CD14-positive monocyte (primary cell): ENCODE measurements at regions of chr18 and their contacts with region 1.

Region 1: GRCh38 chr18:9905401-9905922 is 8.4 kb upstream of the VAPA start:
- DNase-seq: no peak
- H3K4me3 ChIP-seq: no peak overlapping the region
- H3K4me3 Mint-ChIP-seq: no peak overlapping the region
- H3K27ac ChIP-seq: no peak overlapping the region
- H3K27ac Mint-ChIP-seq: no peak overlapping the region
- H3K4me1 ChIP-seq: peaks cover 7 to 8% of the 10 kb centered on the region in 2 donors
- H3K4me1 Mint-ChIP-seq: peaks cover 17% of the 10 kb centered on the region
- H3K27me3 ChIP-seq: no peaks in the 10 kb centered on the region
- H3K27me3 Mint-ChIP-seq: peaks cover 0 to 3% (median 2%) of the 10 kb centered on the region in 3 donors
- CTCF ChIP-seq: no peak

Region 2: DNA sequence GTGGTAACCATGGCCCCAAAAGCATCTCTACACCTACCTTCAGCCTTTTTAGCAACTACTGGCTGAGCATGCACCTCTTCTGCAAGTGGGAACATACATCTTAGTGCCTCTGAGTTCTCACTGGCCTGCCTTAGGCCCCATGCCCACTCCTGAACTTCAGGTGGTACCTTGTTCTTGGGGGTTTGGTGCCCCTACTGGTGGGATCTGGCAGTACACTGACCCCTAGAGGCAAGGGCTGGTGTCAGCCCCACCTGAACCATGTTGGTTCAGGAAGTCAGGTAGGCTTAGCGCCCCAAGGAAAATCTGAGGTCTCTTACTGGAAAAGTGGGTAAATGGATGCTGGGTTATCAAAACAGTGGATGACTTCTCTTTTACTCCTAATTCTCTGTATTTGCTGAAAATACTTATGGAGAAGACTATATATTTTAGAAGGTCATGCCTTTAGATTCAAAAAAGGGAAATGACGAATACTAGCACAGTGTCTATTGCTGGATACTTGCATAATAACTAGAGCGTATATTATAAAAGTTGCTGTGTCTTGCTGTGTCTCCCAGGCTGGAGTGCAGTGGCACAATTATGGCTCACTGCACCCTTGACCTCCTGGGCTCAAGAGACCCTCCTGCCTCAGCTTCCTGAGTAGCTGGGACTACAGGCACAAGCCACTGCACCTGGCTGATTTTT is 112.8 kb before region 1 on chr18:
- intact Hi-C with region 1: no loop called
- DNase-seq: peak; percentile 67 to 84 (median 73)
- H3K4me3 ChIP-seq: peak overlapping the region in 1 of 3 experiments; percentile 2
- H3K4me3 Mint-ChIP-seq: no peak overlapping the region
- H3K27ac ChIP-seq: peak overlapping the region; percentile 77 to 82
- H3K27ac Mint-ChIP-seq: peak overlapping the region; percentile 90 to 98 (median 93)
- H3K4me1 ChIP-seq: peaks cover 22 to 23% of the 10 kb centered on the region in 2 donors
- H3K4me1 Mint-ChIP-seq: peaks cover 33% of the 10 kb centered on the region
- H3K27me3 ChIP-seq: no peaks in the 10 kb centered on the region
- H3K27me3 Mint-ChIP-seq: no peaks in the 10 kb centered on the region
- CTCF ChIP-seq: peak; percentile 98

Region 3: GRCh38 chr18:9849407-9850281 is 55.8 kb before region 1 on chr18:
- intact Hi-C with region 1: loop called (anchors 5 to 10 kb)
- DNase-seq: peak; percentile 83 to 86 (median 85)
- H3K4me3 ChIP-seq: peak overlapping the region in 1 of 3 experiments; percentile 29
- H3K4me3 Mint-ChIP-seq: peak overlapping the region; percentile 68 to 81
- H3K27ac ChIP-seq: peak overlapping the region; percentile 80 to 88
- H3K27ac Mint-ChIP-seq: peak overlapping the region; percentile 94 to 98 (median 97)
- H3K4me1 ChIP-seq: peaks cover 39 to 45% of the 10 kb centered on the region in 2 donors
- H3K4me1 Mint-ChIP-seq: peaks cover 61% of the 10 kb centered on the region
- H3K27me3 ChIP-seq: no peaks in the 10 kb centered on the region
- H3K27me3 Mint-ChIP-seq: peaks cover 0 to 5% (median 0%) of the 10 kb centered on the region in 3 donors
- CTCF ChIP-seq: no peak

Region 4: GRCh38 chr18:9869715-9870430 is 35.6 kb before region 1 on chr18:
- intact Hi-C with region 1: loop called in 1 of 2 experiments (anchors 5 kb)
- DNase-seq: peak; percentile 73 to 83 (median 79)
- H3K4me3 ChIP-seq: no peak overlapping the region
- H3K4me3 Mint-ChIP-seq: peak overlapping the region in 1 of 2 donors; percentile 49
- H3K27ac ChIP-seq: peak overlapping the region in 1 of 2 donors; percentile 63
- H3K27ac Mint-ChIP-seq: peak overlapping the region; percentile 51 to 91 (median 78)
- H3K4me1 ChIP-seq: peaks cover 34 to 47% of the 10 kb centered on the region in 2 donors
- H3K4me1 Mint-ChIP-seq: peaks cover 49% of the 10 kb centered on the region
- H3K27me3 ChIP-seq: no peaks in the 10 kb centered on the region
- H3K27me3 Mint-ChIP-seq: peaks cover 0 to 2% (median 0%) of the 10 kb centered on the region in 3 donors
- CTCF ChIP-seq: no peak

Region 5: DNA sequence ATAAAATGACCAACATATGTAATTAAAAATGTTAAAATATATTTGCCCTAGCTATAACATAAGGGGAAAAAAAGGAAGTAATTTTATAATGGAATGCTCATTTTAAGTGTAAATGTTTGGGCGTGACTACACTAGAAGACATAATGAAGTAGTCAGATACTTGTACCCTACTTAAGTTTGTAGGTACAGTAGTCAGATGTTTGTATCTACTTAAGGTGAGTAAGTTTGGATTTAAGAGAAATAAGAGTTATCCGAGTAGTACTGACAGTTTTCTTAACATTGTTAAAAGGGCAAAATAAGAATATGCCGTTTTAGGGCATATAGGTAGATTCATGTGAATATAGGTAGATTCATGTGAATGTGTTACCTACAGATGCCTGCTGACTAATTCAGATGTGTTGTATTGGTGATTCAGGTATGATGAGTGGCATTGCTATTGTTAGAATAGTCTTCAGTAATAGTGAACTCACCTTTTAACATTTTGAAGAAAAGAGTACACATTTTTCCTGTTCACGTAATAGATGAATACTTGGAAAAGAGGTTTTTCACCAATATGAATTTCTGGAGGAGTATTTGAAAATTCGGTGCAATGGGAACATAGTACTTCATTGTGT is 23.3 kb after region 1 on chr18:
- intact Hi-C with region 1: no loop called
- DNase-seq: no peak
- H3K4me3 ChIP-seq: no peak overlapping the region
- H3K4me3 Mint-ChIP-seq: no peak overlapping the region
- H3K27ac ChIP-seq: no peak overlapping the region
- H3K27ac Mint-ChIP-seq: peak overlapping the region in 1 of 7 donors; percentile 26
- H3K4me1 ChIP-seq: peaks cover 5 to 20% of the 10 kb centered on the region in 2 donors
- H3K4me1 Mint-ChIP-seq: peaks cover 37% of the 10 kb centered on the region
- H3K27me3 ChIP-seq: no peaks in the 10 kb centered on the region
- H3K27me3 Mint-ChIP-seq: no peaks in the 10 kb centered on the region
- CTCF ChIP-seq: no peak

Region 6: DNA sequence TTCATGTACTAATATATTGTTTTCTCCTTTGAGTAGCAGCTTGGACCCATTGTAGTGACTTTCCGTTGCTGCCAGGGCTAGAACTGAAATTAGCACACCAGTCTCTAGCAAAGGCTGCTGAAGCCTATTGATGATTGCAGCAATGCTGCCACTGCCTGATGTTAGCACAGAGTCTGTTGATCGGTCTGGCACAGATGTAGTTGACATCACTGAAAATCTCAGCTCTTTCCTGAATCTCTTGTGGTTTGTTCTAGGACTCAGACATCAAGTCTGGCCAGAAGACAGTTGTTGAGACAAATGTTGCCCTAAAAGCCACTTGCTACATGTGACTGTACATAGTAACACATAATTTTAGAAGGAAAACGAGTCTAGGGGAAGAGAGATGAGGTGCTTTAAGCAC is 55.6 kb after region 1 on chr18:
- intact Hi-C with region 1: no loop called
- DNase-seq: no peak
- H3K4me3 ChIP-seq: no peak overlapping the region
- H3K4me3 Mint-ChIP-seq: no peak overlapping the region
- H3K27ac ChIP-seq: no peak overlapping the region
- H3K27ac Mint-ChIP-seq: no peak overlapping the region
- H3K4me1 ChIP-seq: peaks cover 4% of the 10 kb centered on the region in 2 donors
- H3K4me1 Mint-ChIP-seq: peaks cover 10% of the 10 kb centered on the region
- H3K27me3 ChIP-seq: peaks cover 0 to 7% of the 10 kb centered on the region in 2 donors
- H3K27me3 Mint-ChIP-seq: peaks cover 7 to 11% (median 10%) of the 10 kb centered on the region in 3 donors
- CTCF ChIP-seq: no peak

Region 7: DNA sequence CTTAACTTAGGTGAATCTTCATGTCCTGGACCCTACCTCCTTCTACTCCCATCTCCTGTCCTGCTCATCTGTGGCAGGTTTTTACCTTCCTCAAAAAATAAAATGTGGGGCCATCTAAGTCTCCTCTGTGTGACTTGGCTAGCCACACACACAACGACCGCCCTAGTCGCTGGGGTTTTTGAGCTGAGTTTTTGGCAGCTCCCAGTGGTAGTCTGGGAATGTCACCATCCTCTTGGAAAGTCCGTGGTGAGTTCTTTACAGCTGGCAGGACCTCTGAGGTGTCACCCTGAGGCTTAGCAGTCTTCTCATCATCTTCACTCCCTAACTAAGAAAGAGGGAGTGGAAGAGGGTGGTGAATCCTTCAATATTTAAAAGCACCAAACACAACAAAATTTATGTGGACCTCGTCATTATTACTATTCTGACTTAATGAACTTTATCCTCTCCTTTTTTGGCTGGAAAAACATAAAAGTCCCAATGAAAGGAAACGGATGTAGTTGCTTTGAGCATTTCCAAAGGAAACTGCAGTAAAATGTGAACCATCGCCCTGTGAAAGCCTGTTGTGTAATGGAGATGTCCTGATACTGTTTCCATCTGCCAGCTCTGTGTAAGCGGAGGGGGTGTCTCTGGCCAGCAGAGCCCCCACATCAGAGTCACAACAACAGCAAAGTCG is 87.0 kb after region 1 on chr18:
- intact Hi-C with region 1: no loop called
- DNase-seq: no peak
- H3K4me3 ChIP-seq: no peak overlapping the region
- H3K4me3 Mint-ChIP-seq: peak overlapping the region in 1 of 2 donors; percentile 66
- H3K27ac ChIP-seq: no peak overlapping the region
- H3K27ac Mint-ChIP-seq: peak overlapping the region in 1 of 7 donors; percentile 49
- H3K4me1 ChIP-seq: peaks cover 29 to 30% of the 10 kb centered on the region in 2 donors
- H3K4me1 Mint-ChIP-seq: peaks cover 34% of the 10 kb centered on the region
- H3K27me3 ChIP-seq: no peaks in the 10 kb centered on the region
- H3K27me3 Mint-ChIP-seq: peaks cover 6 to 11% (median 9%) of the 10 kb centered on the region in 3 donors
- CTCF ChIP-seq: no peak